Activated CD4-positive, alpha-beta memory T cell treated with anti-CD3 and anti-CD28 coated beads for 36 hours (primary cell): ENCODE measurements at regions of chr11 and their contacts with region 1.

Region 1: GRCh38 chr11:1572197-1573076 is at the start of gene DUSP8:
- DNase-seq: peak; percentile 93
- H3K4me3 Mint-ChIP-seq: peak within 1 kb of the TSS; percentile 42
- H3K27ac Mint-ChIP-seq: no peak within 1 kb of the TSS
- H3K4me1 Mint-ChIP-seq: peaks cover 16% of the 10 kb centered on the region
- H3K27me3 Mint-ChIP-seq: peaks cover 2% of the 10 kb centered on the region
- total RNA-seq, gene DUSP8: 1.6 to 2.4 TPM

Region 2: GRCh38 chr11:1202776-1203504 is 369.5 kb before region 1 on chr11:
- CTCF ChIA-PET with region 1: interaction called, 21 read pairs
- POLR2A ChIA-PET with region 1: no interaction called
- intact Hi-C with region 1: loop called (anchors 5 kb)
- DNase-seq: peak; percentile 73
- H3K4me3 Mint-ChIP-seq: no peak overlapping the region
- H3K27ac Mint-ChIP-seq: no peak overlapping the region
- H3K4me1 Mint-ChIP-seq: no peaks in the 10 kb centered on the region
- H3K27me3 Mint-ChIP-seq: no peaks in the 10 kb centered on the region

Region 3: GRCh38 chr11:1389103-1389931 is 183.1 kb before region 1 on chr11:
- CTCF ChIA-PET with region 1: interaction called, 6 read pairs
- POLR2A ChIA-PET with region 1: no interaction called
- intact Hi-C with region 1: loop called (anchors 2 kb)
- DNase-seq: peak; percentile 97
- H3K4me3 Mint-ChIP-seq: peak overlapping the region; percentile 61
- H3K27ac Mint-ChIP-seq: no peak overlapping the region
- H3K4me1 Mint-ChIP-seq: peaks cover 6% of the 10 kb centered on the region
- H3K27me3 Mint-ChIP-seq: peaks cover 26% of the 10 kb centered on the region

Region 4: DNA sequence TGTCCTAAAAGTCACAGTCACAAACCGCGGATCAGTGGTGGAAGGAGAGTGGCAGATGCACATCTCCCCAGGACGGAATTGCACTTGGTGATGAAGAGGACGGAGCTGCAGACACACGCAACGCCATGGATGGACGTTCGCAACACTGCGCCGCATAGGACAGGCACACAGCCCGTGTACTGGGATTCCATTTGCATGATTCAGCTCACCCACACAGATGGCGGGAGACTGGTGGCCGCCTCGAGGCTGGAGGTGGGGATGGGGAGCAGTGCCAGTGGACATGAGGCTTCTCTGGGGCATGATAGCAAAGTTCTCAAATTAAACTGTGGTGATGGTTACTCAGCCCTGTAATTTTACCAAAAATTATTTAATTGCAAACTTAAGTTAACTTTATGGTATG is 37.8 kb before region 1 on chr11:
- CTCF ChIA-PET with region 1: interaction called, 12 read pairs
- POLR2A ChIA-PET with region 1: no interaction called
- intact Hi-C with region 1: loop called (anchors 5 kb)
- DNase-seq: no peak
- H3K4me3 Mint-ChIP-seq: no peak overlapping the region
- H3K27ac Mint-ChIP-seq: no peak overlapping the region
- H3K4me1 Mint-ChIP-seq: peaks cover 38% of the 10 kb centered on the region
- H3K27me3 Mint-ChIP-seq: no peaks in the 10 kb centered on the region

Region 5: DNA sequence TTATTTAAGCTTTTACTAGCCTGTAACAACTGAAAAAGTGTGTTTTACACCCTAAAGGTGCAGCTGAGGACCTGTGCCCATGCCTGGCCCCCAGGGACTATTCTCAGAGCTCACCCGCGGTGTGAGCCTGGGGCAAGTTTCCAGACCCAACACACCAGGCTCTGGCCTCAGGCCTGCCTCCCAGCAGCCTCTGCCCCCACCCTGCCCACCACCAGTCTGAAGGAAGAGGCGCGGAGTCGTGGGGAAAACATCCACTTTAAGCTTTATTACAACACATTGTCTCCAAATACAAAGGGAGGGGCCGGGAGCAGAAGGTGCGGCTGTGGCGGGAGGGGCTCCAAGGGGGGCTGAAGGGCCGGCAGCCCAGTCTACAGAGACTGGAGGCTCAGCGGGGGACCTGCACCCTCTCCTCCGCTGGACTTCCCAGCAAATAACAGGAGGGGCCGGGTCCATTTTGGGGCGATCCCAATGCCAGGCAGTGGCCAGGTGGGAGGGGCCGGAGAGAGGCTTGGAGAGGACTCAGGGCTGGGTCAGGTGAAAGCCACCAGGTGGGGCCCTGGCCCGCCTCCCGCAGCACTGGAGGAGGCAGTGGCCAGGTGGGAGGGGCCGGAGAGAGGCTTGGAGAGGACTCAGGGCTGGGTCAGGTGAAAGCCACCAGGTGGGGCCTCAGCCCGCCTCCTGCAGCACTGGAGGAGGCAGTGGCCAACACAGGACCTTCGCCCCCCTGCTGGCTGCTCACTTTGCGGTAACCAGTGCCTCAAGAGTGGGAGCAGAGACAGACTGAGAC is 18.4 kb before region 1 on chr11:
- CTCF ChIA-PET with region 1: interaction called, 11 read pairs
- POLR2A ChIA-PET with region 1: no interaction called
- intact Hi-C with region 1: no loop called
- DNase-seq: no peak
- H3K4me3 Mint-ChIP-seq: no peak overlapping the region
- H3K27ac Mint-ChIP-seq: no peak overlapping the region
- H3K4me1 Mint-ChIP-seq: no peaks in the 10 kb centered on the region
- H3K27me3 Mint-ChIP-seq: peaks cover 5% of the 10 kb centered on the region

Region 6: GRCh38 chr11:1598816-1599215 is 26.4 kb after region 1 on chr11:
- CTCF ChIA-PET with region 1: interaction called, 42 read pairs
- POLR2A ChIA-PET with region 1: no interaction called
- intact Hi-C with region 1: no loop called
- DNase-seq: no peak
- H3K4me3 Mint-ChIP-seq: no peak overlapping the region
- H3K27ac Mint-ChIP-seq: no peak overlapping the region
- H3K4me1 Mint-ChIP-seq: peaks cover 15% of the 10 kb centered on the region
- H3K27me3 Mint-ChIP-seq: peaks cover 23% of the 10 kb centered on the region

Region 7: DNA sequence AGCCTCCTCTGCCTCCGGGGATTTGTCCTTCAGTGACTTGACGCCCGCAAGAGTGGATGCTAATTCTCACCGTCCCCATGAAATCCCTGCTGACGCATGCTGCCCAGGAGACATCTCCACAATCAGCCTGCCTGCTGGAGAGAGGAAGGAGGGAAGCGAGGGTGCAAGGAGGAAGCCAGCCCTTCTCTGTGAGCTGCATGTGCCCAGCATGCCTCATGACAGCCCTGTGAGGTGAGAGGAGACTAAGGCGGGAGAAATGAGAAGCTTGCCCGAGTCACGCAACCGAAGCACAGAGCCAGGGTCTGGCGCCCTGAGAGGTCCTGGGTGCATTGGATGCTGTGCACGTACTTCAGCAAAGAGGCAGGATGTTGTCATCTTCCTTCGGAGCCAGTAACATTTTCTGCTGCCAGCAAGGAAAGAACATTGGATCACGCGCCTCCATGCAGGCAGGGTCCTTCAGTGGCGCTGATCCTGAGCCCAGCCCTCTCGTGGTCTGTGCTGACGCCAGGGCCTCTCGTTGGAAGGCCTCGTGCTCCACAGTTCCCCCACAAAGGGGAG is 97.3 kb after region 1 on chr11:
- CTCF ChIA-PET with region 1: no interaction called
- POLR2A ChIA-PET with region 1: no interaction called
- intact Hi-C with region 1: no loop called
- DNase-seq: no peak
- H3K4me3 Mint-ChIP-seq: no peak overlapping the region
- H3K27ac Mint-ChIP-seq: no peak overlapping the region
- H3K4me1 Mint-ChIP-seq: no peaks in the 10 kb centered on the region
- H3K27me3 Mint-ChIP-seq: peaks cover 21% of the 10 kb centered on the region